Naive thymus-derived CD4-positive, alpha-beta T cell (primary cell): ENCODE measurements at regions of chr9 and their contacts with region 1.

Region 1: GRCh38 chr9:132901856-132902831 is 23.4 kb downstream of the SPACA9 start:
- DNase-seq: peak; percentile 55 to 84 (median 79)
- ATAC-seq: peak; percentile 100
- H3K4me3 ChIP-seq: no peak overlapping the region
- H3K4me3 Mint-ChIP-seq: no peak overlapping the region
- H3K27ac ChIP-seq: peak overlapping the region; percentile 8
- H3K27ac Mint-ChIP-seq: peak overlapping the region in 6 of 9 donors; percentile 23 to 88 (median 60)
- H3K4me1 ChIP-seq: no peaks in the 10 kb centered on the region
- H3K4me1 Mint-ChIP-seq: peaks cover 0 to 10% (median 5%) of the 10 kb centered on the region in 7 donors
- H3K27me3 ChIP-seq: no peaks in the 10 kb centered on the region
- H3K27me3 Mint-ChIP-seq: no peaks in the 10 kb centered on the region

Region 2: GRCh38 chr9:132507746-132508469 is 394.2 kb before region 1 on chr9:
- CTCF ChIA-PET with region 1: no interaction called
- POLR2A ChIA-PET with region 1: no interaction called
- intact Hi-C with region 1: loop called (anchors 5 kb)
- DNase-seq: peak; percentile 21 to 62 (median 52)
- ATAC-seq: peak; percentile 74
- H3K4me3 ChIP-seq: no peak overlapping the region
- H3K4me3 Mint-ChIP-seq: no peak overlapping the region
- H3K27ac ChIP-seq: no peak overlapping the region
- H3K27ac Mint-ChIP-seq: no peak overlapping the region
- H3K4me1 ChIP-seq: peaks cover 0 to 7% of the 10 kb centered on the region in 2 donors
- H3K4me1 Mint-ChIP-seq: peaks cover 0 to 14% (median 12%) of the 10 kb centered on the region in 7 donors
- H3K27me3 ChIP-seq: no peaks in the 10 kb centered on the region
- H3K27me3 Mint-ChIP-seq: peaks cover 3 to 24% (median 15%) of the 10 kb centered on the region in 5 donors

Region 3: DNA sequence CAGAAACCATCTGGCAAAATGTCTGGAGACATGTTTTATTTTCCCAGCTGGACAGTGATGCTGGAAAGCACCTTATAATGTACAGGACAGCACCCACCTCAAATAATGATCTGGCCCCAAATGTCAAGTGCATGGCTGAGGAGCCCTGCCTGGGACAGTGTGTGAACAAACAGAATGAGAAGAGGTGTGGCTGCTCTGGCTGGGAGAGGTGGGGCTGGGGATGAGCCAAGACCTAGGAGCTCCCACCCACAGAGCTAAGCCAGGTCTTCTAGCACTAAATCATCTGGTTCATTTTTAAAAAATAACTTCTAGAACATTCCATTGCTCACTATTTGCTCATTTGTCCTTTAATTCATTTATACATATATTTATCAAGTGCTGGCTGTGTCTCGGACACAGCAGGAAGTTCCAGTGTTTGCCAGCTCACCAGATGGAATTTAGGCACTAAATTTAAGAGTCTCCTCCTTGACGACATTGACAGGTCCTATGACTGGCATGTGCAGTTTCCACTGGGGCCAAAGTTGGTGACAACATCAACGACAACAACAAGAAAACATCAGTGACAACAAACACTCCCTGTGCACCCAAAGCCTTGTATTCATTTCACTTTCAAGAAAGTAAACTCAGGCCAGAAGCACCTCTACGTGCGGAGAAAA is 172.8 kb before region 1 on chr9:
- CTCF ChIA-PET with region 1: no interaction called
- POLR2A ChIA-PET with region 1: no interaction called
- intact Hi-C with region 1: no loop called
- DNase-seq: no peak
- ATAC-seq: no peak
- H3K4me3 ChIP-seq: no peak overlapping the region
- H3K4me3 Mint-ChIP-seq: no peak overlapping the region
- H3K27ac ChIP-seq: no peak overlapping the region
- H3K27ac Mint-ChIP-seq: no peak overlapping the region
- H3K4me1 ChIP-seq: no peaks in the 10 kb centered on the region
- H3K4me1 Mint-ChIP-seq: no peaks in the 10 kb centered on the region
- H3K27me3 ChIP-seq: no peaks in the 10 kb centered on the region
- H3K27me3 Mint-ChIP-seq: peaks cover 0 to 33% (median 18%) of the 10 kb centered on the region in 5 donors

Region 4: DNA sequence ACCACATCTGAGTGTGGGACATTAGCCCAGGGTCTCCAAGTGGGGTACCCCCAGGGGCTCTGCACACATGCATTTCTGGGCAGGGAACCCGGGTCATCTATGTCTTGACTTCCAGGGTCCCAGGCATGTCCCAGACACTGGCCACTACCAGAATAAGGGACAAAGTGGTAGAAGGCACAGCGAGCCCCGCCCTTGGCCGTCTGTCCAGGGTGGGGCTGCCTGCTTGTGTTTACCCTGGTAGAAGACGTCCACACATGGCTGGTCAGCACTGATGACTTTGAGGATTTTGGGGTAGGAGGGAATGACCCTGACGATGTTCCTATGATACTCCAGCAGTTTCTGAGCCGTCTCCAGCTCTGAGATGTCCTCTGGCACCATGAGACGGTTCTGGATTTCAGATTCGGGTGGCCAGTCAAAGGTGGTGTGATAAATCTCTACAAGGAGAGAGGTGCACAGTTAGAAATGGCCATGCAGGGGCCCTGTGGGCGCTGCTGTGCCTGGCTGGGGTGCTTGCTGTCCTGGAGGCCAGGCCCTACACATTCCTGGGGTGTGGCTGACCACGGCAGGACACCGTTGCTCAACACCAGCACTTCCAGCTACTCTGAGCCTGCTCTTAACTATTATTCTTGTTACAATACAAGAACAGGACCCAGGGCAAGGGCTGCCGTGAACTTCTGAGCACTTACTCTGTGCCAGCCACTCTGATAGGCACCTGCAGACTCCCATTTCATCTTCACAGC is 75.4 kb before region 1 on chr9:
- CTCF ChIA-PET with region 1: no interaction called
- POLR2A ChIA-PET with region 1: no interaction called
- intact Hi-C with region 1: loop called in 1 of 2 experiments (anchors 5 kb)
- DNase-seq: no peak
- ATAC-seq: no peak
- H3K4me3 ChIP-seq: no peak overlapping the region
- H3K4me3 Mint-ChIP-seq: no peak overlapping the region
- H3K27ac ChIP-seq: no peak overlapping the region
- H3K27ac Mint-ChIP-seq: no peak overlapping the region
- H3K4me1 ChIP-seq: no peaks in the 10 kb centered on the region
- H3K4me1 Mint-ChIP-seq: peaks cover 0 to 3% (median 0%) of the 10 kb centered on the region in 7 donors
- H3K27me3 ChIP-seq: no peaks in the 10 kb centered on the region
- H3K27me3 Mint-ChIP-seq: peaks cover 11 to 49% (median 22%) of the 10 kb centered on the region in 5 donors

Region 5: GRCh38 chr9:132877824-132878694 is 24.1 kb before region 1 on chr9 and contains the start of gene AK8:
- CTCF ChIA-PET with region 1: interaction called, 3 read pairs
- POLR2A ChIA-PET with region 1: no interaction called
- intact Hi-C with region 1: loop called (anchors 1 to 2 kb)
- DNase-seq: peak; percentile 69 to 88 (median 80)
- ATAC-seq: peak; percentile 91
- H3K4me3 ChIP-seq: peak within 1 kb of the TSS; percentile 98
- H3K4me3 Mint-ChIP-seq: peak within 1 kb of the TSS; percentile 73 to 93 (median 81)
- H3K27ac ChIP-seq: peak within 1 kb of the TSS; percentile 74
- H3K27ac Mint-ChIP-seq: peak within 1 kb of the TSS; percentile 71 to 89 (median 85)
- H3K4me1 ChIP-seq: peaks cover 0 to 6% of the 10 kb centered on the region in 2 donors
- H3K4me1 Mint-ChIP-seq: peaks cover 5 to 30% (median 7%) of the 10 kb centered on the region in 7 donors
- H3K27me3 ChIP-seq: no peaks in the 10 kb centered on the region
- H3K27me3 Mint-ChIP-seq: peaks cover 0 to 12% (median 0%) of the 10 kb centered on the region in 5 donors
- total RNA-seq, gene AK8: 0.10 to 0.20 TPM in 2 of 5 experiments, not detected in the others

Region 6: DNA sequence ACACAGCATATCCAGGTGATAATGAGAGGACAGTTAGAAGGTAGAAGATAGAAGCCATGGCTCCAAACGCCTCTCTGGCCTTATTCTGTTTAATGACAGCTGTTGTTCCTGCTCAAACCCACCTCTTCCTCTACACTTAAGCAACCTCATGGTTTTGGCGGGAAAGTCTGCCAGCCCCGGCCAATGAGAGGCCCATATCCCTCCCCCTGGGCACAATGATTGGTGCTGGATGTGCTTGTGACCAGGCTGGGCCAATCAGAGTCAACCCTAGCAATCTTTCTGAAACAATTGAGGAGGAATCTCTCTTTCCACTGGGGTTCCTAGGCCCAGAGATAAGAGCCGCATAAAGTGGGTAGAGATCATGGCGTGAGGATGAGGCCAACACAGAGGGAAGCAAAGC is 71.6 kb after region 1 on chr9:
- CTCF ChIA-PET with region 1: interaction called, 5 read pairs
- POLR2A ChIA-PET with region 1: no interaction called
- intact Hi-C with region 1: loop called in 1 of 2 experiments (anchors 1 kb)
- DNase-seq: no peak
- ATAC-seq: no peak
- H3K4me3 ChIP-seq: no peak overlapping the region
- H3K4me3 Mint-ChIP-seq: no peak overlapping the region
- H3K27ac ChIP-seq: no peak overlapping the region
- H3K27ac Mint-ChIP-seq: no peak overlapping the region
- H3K4me1 ChIP-seq: no peaks in the 10 kb centered on the region
- H3K4me1 Mint-ChIP-seq: peaks cover 5 to 12% (median 8%) of the 10 kb centered on the region in 7 donors
- H3K27me3 ChIP-seq: peaks cover 0 to 7% of the 10 kb centered on the region in 2 donors
- H3K27me3 Mint-ChIP-seq: peaks cover 12 to 34% (median 25%) of the 10 kb centered on the region in 5 donors